ENCODE measurements at regions of chr1 and their contacts with region 1.

Region 1: DNA sequence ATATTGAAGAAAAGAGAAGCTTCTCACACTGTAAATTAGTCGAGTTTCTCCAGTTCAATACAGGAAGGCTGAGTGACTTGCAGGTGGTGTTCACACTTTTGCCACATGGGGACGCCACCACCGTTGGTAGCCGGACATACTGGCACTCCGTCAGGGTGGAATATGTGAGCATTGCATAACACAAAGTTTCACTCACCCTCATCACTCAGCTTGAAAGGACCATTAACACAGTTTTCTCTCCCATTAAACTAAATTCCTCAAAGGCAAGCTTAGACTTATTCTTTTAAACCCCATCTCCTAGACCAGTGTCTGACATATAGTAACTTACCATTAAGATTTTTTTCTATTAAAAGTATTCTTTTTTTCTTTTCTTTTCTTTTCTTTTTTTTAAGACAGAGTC is 105.3 kb upstream of the SERBP1 start:
- DNase-seq: peak; percentile 75
- H3K4me3 ChIP-seq: no peak overlapping the region
- CTCF ChIP-seq: peak; percentile 99

Region 2: DNA sequence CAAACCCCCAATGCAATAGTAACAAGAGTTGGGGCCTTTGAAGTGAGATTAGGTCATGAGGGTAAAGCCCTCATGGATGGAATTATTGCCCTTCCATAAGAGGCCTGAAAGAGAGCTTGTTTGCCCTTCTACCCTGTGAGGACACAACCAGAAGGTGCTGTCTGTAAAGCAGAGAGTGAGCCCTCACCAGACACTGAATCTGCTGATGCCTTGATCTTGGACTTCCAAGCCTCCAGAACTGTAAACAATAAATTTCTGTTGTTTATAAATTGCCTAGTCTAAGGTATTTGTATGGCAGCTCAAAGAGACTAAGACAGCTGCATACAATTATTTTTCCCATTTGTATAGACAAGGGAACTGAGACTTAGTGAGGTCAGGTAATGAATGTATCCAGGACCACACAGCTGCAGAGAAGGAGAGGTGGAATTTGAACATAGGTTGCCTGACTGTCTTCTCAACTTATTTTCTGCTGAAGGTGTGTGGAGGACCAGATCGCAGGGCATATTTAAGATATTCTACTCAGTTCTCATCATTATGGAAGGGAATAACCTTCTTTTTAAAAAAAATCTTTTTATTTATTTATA is 350.5 kb before region 1 on chr1:
- in situ Hi-C with region 1: no loop called
- DNase-seq: no peak
- H3K4me3 ChIP-seq: no peak overlapping the region
- CTCF ChIP-seq: no peak

Region 3: DNA sequence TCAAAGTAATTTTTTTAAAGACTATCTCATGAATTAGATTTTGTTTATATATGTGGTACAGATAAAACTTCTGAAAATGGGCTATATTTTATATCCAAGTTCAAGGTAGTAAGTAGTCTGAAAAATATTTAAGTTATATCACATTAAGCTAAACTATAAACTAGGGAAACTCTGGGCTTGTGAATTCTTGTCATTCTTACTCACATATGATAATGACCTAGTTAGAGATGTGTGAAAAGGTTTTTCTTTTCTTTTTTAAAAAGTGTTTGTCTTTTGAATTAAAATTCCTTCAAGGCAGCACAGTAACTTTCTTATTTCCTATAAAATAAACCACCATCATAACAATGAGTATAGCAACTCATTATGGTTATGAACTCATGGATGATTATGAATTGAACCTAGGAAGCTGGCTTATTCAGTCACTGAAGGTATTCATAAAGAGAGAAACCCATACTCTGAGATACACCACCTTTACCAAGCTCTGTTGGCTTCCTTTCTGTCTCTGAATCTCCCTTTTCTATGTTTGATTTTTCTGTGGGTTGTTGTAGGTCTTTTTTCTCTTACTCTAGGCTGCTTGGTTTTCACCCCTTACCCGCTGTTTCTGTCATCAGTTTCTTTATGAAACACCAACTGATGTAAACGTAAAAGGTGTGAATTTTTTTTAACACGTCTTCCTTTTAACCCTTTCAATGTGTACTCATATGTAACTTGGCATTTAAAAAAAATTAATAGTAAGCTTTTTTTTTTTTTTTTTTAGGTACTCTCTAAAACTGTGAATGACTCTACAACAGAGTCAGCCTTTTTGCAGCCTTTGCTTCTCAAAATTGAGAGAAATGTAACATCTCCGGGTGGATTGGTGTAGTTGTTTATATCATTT is 202.6 kb before region 1 on chr1:
- in situ Hi-C with region 1: no loop called
- DNase-seq: no peak
- H3K4me3 ChIP-seq: no peak overlapping the region
- CTCF ChIP-seq: no peak

Region 4: DNA sequence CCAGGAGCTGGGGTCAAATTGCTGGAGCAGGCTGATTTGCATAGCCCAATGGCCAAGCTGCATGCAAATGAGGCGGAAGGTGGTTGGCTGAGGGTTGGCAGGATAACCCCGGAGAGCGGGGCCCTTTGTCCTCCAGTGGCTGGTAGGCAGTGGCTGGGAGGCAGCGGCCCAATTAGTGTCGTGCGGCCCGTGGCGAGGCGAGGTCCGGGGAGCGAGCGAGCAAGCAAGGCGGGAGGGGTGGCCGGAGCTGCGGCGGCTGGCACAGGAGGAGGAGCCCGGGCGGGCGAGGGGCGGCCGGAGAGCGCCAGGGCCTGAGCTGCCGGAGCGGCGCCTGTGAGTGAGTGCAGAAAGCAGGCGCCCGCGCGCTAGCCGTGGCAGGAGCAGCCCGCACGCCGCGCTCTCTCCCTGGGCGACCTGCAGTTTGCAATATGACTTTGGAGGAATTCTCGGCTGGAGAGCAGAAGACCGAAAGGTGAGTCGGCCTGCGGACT is 149.6 kb after region 1 on chr1 and contains the start of gene GADD45A:
- in situ Hi-C with region 1: loop called (anchors 25 kb)
- DNase-seq: peak; percentile 98
- H3K4me3 ChIP-seq: peak within 1 kb of the TSS; percentile 94
- CTCF ChIP-seq: no peak

Region 5: DNA sequence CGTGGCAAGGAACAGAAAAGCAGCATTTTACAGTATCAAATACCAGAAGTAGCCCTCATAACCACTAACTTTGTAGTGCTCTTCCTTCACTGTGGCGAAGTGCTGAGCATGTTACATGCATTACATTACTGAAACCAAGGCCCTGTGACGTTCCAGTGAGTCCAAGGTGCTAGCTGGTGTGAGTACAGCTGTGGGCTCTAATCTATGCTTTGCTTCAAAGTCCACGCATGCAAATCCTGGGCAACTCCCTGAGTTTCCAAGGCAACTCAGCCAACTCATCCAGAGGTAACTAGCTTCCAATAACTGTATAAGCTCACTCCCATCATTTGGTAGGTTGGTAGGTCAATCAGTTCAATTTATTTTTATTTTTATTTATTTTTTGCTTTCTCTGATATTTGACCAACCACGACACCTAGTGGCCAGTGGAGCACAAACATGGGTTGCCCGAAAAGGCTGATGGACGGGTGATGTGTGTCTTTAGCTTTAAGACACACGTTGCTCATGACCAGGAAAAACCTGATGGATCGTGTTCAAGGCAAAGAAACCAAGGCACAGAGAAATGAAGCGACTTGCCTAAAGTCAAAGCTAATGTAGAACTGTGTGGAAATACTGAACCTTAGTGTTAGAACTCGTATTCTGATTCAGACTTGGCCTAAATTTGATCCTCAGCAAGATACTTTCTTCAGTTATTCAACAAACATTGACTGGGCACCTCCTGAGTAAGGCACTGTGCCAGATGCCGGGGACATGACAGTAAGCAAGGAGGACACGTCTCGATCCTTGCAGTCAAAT is 224.8 kb after region 1 on chr1:
- in situ Hi-C with region 1: loop called (anchors 25 kb)
- DNase-seq: no peak
- H3K4me3 ChIP-seq: no peak overlapping the region
- CTCF ChIP-seq: peak; percentile 83

Region 6: DNA sequence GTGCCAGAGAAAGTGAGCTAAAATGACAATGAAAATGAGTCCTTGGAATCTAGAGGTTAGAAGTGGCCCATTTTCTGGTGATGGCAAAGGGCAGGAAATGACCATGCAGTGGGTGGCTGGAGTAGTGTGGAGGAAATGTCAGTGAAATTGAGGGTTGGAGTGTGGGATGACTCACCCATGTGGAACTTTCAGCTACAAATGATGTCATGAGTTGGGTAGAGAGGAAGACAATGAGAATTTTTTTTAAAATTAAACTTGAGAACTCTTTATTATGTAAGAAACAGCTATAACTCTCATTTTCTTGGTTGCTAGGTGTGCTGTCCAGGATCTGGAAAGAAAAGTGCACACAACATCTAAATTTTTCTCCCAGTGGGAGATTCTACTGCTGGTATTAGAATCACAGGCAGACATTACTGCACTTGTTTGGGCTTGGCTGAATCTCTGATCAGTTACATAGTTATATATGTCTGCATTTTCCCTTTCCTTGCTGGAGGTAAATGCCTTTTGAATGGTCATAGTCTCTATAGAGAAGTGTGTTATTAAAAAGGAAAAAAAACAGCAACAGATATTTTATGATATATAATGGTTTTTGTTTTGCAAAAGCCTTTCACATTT is 354.6 kb after region 1 on chr1:
- in situ Hi-C with region 1: no loop called
- DNase-seq: peak; percentile 81
- H3K4me3 ChIP-seq: no peak overlapping the region
- CTCF ChIP-seq: no peak

Region 7: DNA sequence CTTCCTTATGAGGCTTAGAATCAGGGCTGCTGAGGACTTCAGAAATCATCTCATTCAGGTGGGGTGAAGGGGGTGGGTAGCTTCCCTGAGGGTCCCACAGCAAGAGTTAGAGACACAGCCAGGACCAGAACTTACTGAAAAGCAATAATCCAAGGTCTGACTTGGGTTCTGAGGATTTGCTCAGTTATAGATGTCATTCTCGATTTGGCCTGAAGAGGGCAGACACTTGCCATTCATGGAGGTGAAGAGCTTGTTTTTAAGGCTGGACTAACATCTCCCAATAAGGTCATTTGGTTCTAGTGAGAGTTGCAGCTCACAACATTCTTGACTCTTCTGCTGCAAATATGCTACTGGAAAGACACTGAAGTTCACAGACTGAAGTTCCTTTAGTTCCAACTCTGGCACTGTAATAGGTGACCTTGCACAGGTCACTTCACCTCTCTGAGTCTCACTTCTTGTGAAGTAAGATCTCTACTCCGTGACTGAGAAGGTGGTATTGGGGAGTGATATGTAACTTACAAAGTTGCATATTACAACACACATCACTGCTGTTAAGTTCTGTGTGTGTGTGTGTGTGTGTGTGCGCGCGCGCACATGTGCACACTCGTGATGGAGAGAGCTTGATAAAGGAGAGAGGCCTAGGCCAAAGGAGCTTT is 584.8 kb after region 1 on chr1:
- in situ Hi-C with region 1: loop called (anchors 25 kb)
- DNase-seq: peak; percentile 75
- H3K4me3 ChIP-seq: no peak overlapping the region
- CTCF ChIP-seq: peak; percentile 74